CD14-positive monocyte (primary cell): ENCODE measurements at regions of chr1 and their contacts with region 1.

Region 1: DNA sequence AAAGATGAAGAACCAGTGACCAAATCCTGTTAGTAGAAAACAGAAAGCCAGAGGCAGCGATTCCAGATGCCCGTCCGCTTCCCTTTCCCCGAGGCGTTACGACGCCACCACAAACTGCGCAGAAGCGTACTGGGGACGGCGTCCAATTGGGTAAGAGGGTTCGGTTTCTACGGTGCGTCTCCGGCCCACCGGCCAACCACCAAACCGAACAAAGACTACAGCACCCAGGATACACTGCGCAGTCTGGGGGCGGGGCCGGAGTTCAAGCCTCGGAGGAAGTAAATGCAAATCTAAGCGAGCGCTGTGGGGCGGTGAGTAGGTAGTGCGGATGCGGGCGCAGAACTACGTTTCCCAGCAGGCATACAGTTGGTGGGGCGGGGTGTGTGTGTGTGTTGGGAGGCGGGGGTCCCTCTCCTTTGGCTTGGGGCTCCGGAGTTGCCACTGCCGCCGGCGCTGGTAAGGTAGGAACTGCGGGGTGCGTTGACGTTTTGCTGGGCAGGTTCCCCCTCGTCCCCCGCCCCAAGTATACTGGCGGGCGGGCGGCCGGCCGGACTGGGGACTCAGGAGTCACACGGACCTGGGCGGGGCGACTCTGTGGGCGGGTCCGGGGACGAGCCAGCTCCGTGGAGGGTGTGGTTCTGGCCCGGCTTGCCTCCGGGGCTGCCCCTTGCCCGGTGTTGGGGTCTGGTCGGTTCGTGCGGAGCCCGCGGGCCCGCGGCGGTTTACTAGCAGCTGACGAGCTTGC is at the starts of genes SWT1 and TRMT1L:
- DNase-seq: peak; percentile 98 to 99 (median 99)
- H3K4me3 ChIP-seq: peak within 1 kb of the TSS; percentile 80 to 90 (median 87)
- H3K4me3 Mint-ChIP-seq: peak within 1 kb of the TSS; percentile 95 to 99
- H3K27ac ChIP-seq: peak within 1 kb of the TSS; percentile 96 to 98
- H3K27ac Mint-ChIP-seq: peak within 1 kb of the TSS; percentile 97 to 99 (median 99)
- H3K4me1 ChIP-seq: peaks cover 22 to 46% of the 10 kb centered on the region in 2 donors
- H3K4me1 Mint-ChIP-seq: peaks cover 42% of the 10 kb centered on the region
- H3K27me3 ChIP-seq: no peaks in the 10 kb centered on the region
- H3K27me3 Mint-ChIP-seq: peaks cover 0 to 4% (median 3%) of the 10 kb centered on the region in 3 donors
- CTCF ChIP-seq: no peak
- polyA plus RNA-seq, gene SWT1: 0.89 to 2.8 (median 1.7) TPM
- polyA plus RNA-seq, gene TRMT1L: 5.0 to 11.5 (median 7.4) TPM

Region 2: GRCh38 chr1:184754476-184755225 is 402.4 kb before region 1 on chr1 and contains the start of gene EDEM3:
- intact Hi-C with region 1: loop called (anchors 2 to 5 kb)
- DNase-seq: peak; percentile 99
- H3K4me3 ChIP-seq: peak within 1 kb of the TSS; percentile 88 to 100 (median 97)
- H3K4me3 Mint-ChIP-seq: peak within 1 kb of the TSS; percentile 91 to 97
- H3K27ac ChIP-seq: peak within 1 kb of the TSS; percentile 88 to 91
- H3K27ac Mint-ChIP-seq: peak within 1 kb of the TSS; percentile 89 to 97 (median 95)
- H3K4me1 ChIP-seq: peaks cover 17 to 44% of the 10 kb centered on the region in 2 donors
- H3K4me1 Mint-ChIP-seq: peaks cover 32% of the 10 kb centered on the region
- H3K27me3 ChIP-seq: no peaks in the 10 kb centered on the region
- H3K27me3 Mint-ChIP-seq: peaks cover 0 to 2% (median 0%) of the 10 kb centered on the region in 3 donors
- CTCF ChIP-seq: no peak
- polyA plus RNA-seq, gene EDEM3: 15.5 to 21.9 (median 18.0) TPM

Region 3: DNA sequence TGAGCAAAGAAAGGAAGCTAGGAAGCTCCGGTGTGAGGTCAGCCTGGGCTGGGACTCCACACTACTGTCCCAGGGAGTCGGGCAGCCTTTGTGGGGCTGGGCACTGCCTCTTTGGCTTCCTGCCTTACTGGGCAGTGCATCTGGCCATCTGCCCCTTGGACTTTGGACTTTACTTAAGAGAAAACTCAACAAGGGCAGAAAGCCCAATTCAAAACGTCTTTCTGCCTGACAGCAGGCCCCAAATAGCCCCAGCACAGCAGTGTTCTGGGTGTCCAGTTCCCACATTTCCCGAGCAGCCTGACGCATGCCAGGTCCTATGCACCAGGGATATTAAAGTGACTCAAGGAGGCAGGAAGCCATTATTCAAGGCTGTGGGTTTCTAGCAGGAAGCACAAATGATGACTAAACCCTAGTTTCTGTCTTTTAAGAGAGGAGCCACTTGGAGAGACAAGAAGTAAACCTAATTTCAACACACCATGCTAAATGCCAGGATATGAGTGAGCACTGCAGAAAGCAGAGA is 364.5 kb before region 1 on chr1:
- intact Hi-C with region 1: loop called in 1 of 2 experiments (anchors 5 kb)
- DNase-seq: peak; percentile 87 to 97 (median 96)
- H3K4me3 ChIP-seq: peak overlapping the region in 1 of 3 experiments; percentile 53
- H3K4me3 Mint-ChIP-seq: peak overlapping the region; percentile 37 to 79
- H3K27ac ChIP-seq: peak overlapping the region; percentile 77
- H3K27ac Mint-ChIP-seq: peak overlapping the region; percentile 79 to 95 (median 89)
- H3K4me1 ChIP-seq: peaks cover 36 to 55% of the 10 kb centered on the region in 2 donors
- H3K4me1 Mint-ChIP-seq: peaks cover 50% of the 10 kb centered on the region
- H3K27me3 ChIP-seq: no peaks in the 10 kb centered on the region
- H3K27me3 Mint-ChIP-seq: peaks cover 0 to 2% (median 0%) of the 10 kb centered on the region in 3 donors
- CTCF ChIP-seq: no peak

Region 4: GRCh38 chr1:184805667-184806295 is 351.2 kb before region 1 on chr1:
- intact Hi-C with region 1: loop called in 1 of 2 experiments (anchors 5 kb)
- DNase-seq: peak; percentile 78 to 88 (median 81)
- H3K4me3 ChIP-seq: peak overlapping the region in 1 of 3 experiments; percentile 5
- H3K4me3 Mint-ChIP-seq: no peak overlapping the region
- H3K27ac ChIP-seq: peak overlapping the region; percentile 11 to 19
- H3K27ac Mint-ChIP-seq: peak overlapping the region; percentile 71 to 88 (median 80)
- H3K4me1 ChIP-seq: peaks cover 19% of the 10 kb centered on the region in 2 donors
- H3K4me1 Mint-ChIP-seq: peaks cover 19% of the 10 kb centered on the region
- H3K27me3 ChIP-seq: no peaks in the 10 kb centered on the region
- H3K27me3 Mint-ChIP-seq: no peaks in the 10 kb centered on the region
- CTCF ChIP-seq: peak; percentile 93

Region 5: GRCh38 chr1:185044981-185045813 is 111.8 kb before region 1 on chr1 and contains the start of gene RNF2:
- intact Hi-C with region 1: loop called in 1 of 2 experiments (anchors 5 kb)
- DNase-seq: peak; percentile 77 to 80 (median 77)
- H3K4me3 ChIP-seq: peak within 1 kb of the TSS; percentile 69 to 88 (median 88)
- H3K4me3 Mint-ChIP-seq: peak within 1 kb of the TSS; percentile 97 to 98
- H3K27ac ChIP-seq: peak within 1 kb of the TSS; percentile 65 to 80
- H3K27ac Mint-ChIP-seq: peak within 1 kb of the TSS; percentile 83 to 94 (median 91)
- H3K4me1 ChIP-seq: peaks cover 22 to 37% of the 10 kb centered on the region in 2 donors
- H3K4me1 Mint-ChIP-seq: peaks cover 48% of the 10 kb centered on the region
- H3K27me3 ChIP-seq: no peaks in the 10 kb centered on the region
- H3K27me3 Mint-ChIP-seq: peaks cover 0 to 2% (median 1%) of the 10 kb centered on the region in 3 donors
- CTCF ChIP-seq: no peak
- polyA plus RNA-seq, gene RNF2: 15.5 to 25.2 (median 19.3) TPM

Region 6: GRCh38 chr1:185244015-185244747 is 87.2 kb after region 1 on chr1:
- intact Hi-C with region 1: no loop called
- DNase-seq: peak; percentile 2 to 57 (median 5)
- H3K4me3 ChIP-seq: no peak overlapping the region
- H3K4me3 Mint-ChIP-seq: no peak overlapping the region
- H3K27ac ChIP-seq: no peak overlapping the region
- H3K27ac Mint-ChIP-seq: no peak overlapping the region
- H3K4me1 ChIP-seq: no peaks in the 10 kb centered on the region
- H3K4me1 Mint-ChIP-seq: no peaks in the 10 kb centered on the region
- H3K27me3 ChIP-seq: no peaks in the 10 kb centered on the region
- H3K27me3 Mint-ChIP-seq: no peaks in the 10 kb centered on the region
- CTCF ChIP-seq: no peak

Region 7: GRCh38 chr1:185317034-185317885 is 160.2 kb after region 1 on chr1 and contains the start of gene IVNS1ABP:
- intact Hi-C with region 1: loop called (anchors 5 to 10 kb)
- DNase-seq: peak; percentile 92 to 98 (median 97)
- H3K4me3 ChIP-seq: peak within 1 kb of the TSS; percentile 87 to 99 (median 94)
- H3K4me3 Mint-ChIP-seq: peak within 1 kb of the TSS; percentile 92 to 98
- H3K27ac ChIP-seq: peak within 1 kb of the TSS; percentile 92 to 97
- H3K27ac Mint-ChIP-seq: peak within 1 kb of the TSS; percentile 99 to 100 (median 100)
- H3K4me1 ChIP-seq: peaks cover 45 to 47% of the 10 kb centered on the region in 2 donors
- H3K4me1 Mint-ChIP-seq: peaks cover 46% of the 10 kb centered on the region
- H3K27me3 ChIP-seq: no peaks in the 10 kb centered on the region
- H3K27me3 Mint-ChIP-seq: no peaks in the 10 kb centered on the region
- CTCF ChIP-seq: no peak
- polyA plus RNA-seq, gene IVNS1ABP: 50.9 to 97.7 (median 69.2) TPM

Region 8: GRCh38 chr1:186375088-186375953 is 1218.3 kb after region 1 on chr1 and contains the starts of genes ODR4 and TPR:
- intact Hi-C with region 1: loop called in 1 of 2 experiments (anchors 10 kb)
- DNase-seq: peak; percentile 98 to 99 (median 99)
- H3K4me3 ChIP-seq: peak within 1 kb of the TSS; percentile 70 to 97 (median 89)
- H3K4me3 Mint-ChIP-seq: peak within 1 kb of the TSS; percentile 95 to 98
- H3K27ac ChIP-seq: peak within 1 kb of the TSS; percentile 92 to 98
- H3K27ac Mint-ChIP-seq: peak within 1 kb of the TSS; percentile 98 to 100 (median 99)
- H3K4me1 ChIP-seq: peaks cover 13 to 27% of the 10 kb centered on the region in 2 donors
- H3K4me1 Mint-ChIP-seq: peaks cover 14% of the 10 kb centered on the region
- H3K27me3 ChIP-seq: no peaks in the 10 kb centered on the region
- H3K27me3 Mint-ChIP-seq: no peaks in the 10 kb centered on the region
- CTCF ChIP-seq: peak; percentile 86
- polyA plus RNA-seq, gene ODR4: 6.4 to 10.1 (median 9.7) TPM
- polyA plus RNA-seq, gene TPR: 4.3 to 23.3 (median 13.2) TPM